Tibial artery (tissue), 4 donors: ENCODE measurements at regions of chr17 and their contacts with region 1.

Region 1: DNA sequence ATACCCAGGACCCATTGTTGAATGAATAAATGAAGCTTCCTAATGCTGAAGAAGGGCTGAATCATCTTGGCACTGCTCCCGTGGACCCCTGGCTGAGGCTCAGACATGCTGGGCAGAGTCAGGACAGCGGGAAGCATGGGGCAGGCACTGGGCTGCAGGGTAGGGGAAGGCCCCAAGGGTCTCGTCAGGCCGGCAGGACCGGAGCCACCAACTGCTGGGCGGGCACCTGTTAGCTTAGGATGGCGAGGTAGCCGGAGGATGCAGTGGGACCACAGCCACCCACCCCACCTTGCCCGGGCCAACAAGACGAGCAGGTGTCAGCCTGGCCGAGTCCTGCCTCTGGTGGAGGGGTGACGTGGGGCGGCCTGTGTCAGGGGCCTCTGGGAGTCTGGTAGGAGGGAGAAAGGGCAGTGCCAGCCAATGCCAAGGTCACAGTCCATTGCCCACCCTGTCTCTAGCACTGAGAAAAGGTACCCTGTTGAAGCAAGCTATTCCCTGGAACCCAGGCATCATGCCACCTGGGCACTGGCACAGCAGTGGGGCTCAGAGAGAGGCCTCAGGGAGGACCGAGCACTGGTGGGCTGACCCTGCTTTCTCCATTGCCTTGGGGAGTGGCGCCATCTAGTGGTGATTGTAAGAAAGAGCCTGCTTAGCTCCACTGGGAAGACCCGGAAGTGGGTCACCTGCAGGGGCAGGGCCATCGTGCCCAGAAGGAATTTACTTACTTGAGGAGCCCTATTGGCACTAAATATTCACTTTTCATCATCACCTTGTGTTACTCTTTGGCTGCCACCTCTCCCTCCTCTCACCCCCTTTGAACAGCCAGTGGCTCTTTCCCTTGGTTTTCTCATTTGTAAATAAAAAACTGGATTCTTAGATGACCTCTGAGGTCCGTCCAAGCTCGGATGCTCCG is 3.0 kb upstream of the DLX3 start:
- DNase-seq: peak; percentile 50 to 81
- H3K4me3 ChIP-seq: no peak overlapping the region
- H3K27ac ChIP-seq: no peak overlapping the region
- H3K4me1 ChIP-seq: peaks cover 0 to 42% (median 32%) of the 10 kb centered on the region in 4 donors
- H3K27me3 ChIP-seq: peaks cover 4 to 83% of the 10 kb centered on the region in 2 donors
- CTCF ChIP-seq: peak; percentile 90 to 91

Region 2: DNA sequence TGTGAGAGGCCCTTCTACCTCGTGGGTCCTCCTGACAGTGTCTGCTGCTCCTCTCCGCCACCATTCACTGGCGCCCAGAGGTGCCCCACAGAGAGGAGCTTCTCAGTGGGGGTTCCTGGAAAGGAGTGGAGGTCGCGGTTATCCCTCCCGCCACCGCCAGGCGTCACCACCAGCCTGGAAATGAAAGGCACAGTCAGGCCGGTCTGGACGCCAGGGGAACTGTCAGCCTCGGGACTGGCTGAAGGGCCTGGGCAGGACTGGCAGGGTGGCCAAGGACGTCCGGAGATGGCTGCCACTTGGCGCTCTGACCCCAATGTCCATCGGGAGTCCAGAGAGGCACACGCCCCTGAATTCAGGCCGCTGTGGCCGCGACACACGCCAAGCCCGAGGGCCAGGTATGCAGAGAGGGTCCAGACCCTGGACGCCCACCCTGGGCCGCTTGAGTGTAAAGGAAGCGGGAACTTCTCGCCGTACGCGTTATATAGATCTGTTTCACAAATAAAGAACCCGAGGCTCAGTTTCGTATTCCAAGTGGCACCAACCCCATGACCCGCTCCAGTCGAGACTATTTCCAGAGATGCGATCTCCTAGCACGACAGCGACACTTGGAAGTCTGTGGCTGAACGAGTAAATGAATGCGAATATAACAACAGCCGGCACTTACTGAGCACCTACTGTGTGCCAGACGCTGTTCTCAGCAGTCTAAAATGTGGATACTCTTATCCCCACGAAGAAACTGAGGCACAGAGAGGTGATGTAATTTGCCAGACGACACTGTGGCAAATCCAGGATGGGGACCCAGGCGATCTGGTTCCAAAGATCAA is 430.0 kb before region 1 on chr17:
- intact Hi-C with region 1: loop called (anchors 10 kb)
- DNase-seq: peak; percentile 92 to 96
- H3K4me3 ChIP-seq: peak overlapping the region; percentile 49 to 51
- H3K27ac ChIP-seq: peak overlapping the region; percentile 83 to 90
- H3K4me1 ChIP-seq: peaks cover 0 to 49% (median 27%) of the 10 kb centered on the region in 4 donors
- H3K27me3 ChIP-seq: no peaks in the 10 kb centered on the region
- CTCF ChIP-seq: peak; percentile 93 to 100

Region 3: DNA sequence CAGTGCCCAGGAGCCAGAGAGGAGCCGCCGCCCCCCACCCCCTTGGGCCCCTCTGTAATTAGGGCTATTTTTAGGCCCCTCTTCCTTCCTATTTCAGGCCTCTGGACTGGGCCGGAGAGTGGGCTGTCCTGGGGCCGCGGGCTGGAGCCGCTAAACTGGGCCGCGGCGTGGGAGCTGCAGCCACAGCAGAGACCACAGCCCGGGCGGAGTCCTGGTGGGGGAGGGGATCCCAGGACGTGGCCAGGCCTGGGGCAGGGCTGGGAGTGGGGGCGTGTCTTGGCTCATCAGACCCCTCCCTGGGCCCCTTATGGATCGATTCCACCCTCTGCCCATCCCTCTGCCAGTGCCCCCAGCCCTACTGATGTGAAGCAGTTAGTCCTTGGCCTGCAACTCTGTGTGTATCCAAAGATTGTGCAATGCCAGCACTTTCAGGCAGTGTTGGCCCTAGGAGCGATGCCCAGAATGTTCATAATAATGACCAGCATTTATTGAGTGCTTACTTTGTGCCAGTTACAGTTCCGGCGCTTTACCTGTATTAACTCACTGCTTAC is 135.2 kb before region 1 on chr17:
- intact Hi-C with region 1: loop called (anchors 1 kb)
- DNase-seq: no peak
- H3K4me3 ChIP-seq: no peak overlapping the region
- H3K27ac ChIP-seq: no peak overlapping the region
- H3K4me1 ChIP-seq: peaks cover 0 to 7% (median 0%) of the 10 kb centered on the region in 4 donors
- H3K27me3 ChIP-seq: peaks cover 0 to 18% of the 10 kb centered on the region in 2 donors
- CTCF ChIP-seq: no peak

Region 4: DNA sequence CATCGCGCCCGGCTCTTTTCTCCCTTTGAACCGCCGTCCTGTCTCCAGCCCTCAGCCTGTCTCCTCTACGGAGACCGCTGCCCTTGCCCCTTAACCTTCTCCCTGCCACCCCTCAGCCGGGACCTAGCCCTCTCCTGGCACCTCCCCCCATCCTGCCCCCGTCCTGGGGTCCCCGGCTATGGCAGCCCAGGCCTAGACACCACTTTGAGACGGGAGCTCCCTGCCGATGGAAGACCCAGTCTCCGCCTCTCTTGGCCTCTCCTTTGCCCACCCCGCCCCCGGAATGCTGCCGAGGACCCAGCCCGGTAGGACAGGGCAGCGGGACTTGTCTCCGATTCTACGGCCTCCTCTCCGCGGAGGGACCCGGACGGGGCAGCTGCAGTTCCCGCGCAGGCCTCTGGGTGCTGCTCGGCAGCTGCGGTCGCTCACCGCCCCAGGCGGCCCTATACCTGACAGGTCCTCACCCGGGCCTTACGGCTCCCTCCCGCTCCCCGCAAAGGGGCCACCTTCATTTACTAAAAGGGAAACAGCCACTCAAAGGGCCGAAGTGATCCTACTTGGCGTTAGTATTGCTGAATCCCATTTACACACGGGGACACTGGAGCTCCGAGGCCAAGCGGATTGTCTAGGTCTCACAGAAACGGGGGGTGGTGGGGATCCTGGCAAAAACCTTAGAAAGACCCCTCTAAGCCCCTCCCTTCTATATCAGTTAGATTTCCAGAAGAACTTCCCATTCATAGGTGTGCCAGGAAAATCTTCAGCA is 117.6 kb before region 1 on chr17:
- intact Hi-C with region 1: loop called (anchors 2 kb)
- DNase-seq: peak in 1 of 2 donors; percentile 55
- H3K4me3 ChIP-seq: no peak overlapping the region
- H3K27ac ChIP-seq: no peak overlapping the region
- H3K4me1 ChIP-seq: peaks cover 0 to 7% (median 7%) of the 10 kb centered on the region in 4 donors
- H3K27me3 ChIP-seq: peaks cover 0 to 36% of the 10 kb centered on the region in 2 donors
- CTCF ChIP-seq: peak; percentile 96 to 99

Region 5: DNA sequence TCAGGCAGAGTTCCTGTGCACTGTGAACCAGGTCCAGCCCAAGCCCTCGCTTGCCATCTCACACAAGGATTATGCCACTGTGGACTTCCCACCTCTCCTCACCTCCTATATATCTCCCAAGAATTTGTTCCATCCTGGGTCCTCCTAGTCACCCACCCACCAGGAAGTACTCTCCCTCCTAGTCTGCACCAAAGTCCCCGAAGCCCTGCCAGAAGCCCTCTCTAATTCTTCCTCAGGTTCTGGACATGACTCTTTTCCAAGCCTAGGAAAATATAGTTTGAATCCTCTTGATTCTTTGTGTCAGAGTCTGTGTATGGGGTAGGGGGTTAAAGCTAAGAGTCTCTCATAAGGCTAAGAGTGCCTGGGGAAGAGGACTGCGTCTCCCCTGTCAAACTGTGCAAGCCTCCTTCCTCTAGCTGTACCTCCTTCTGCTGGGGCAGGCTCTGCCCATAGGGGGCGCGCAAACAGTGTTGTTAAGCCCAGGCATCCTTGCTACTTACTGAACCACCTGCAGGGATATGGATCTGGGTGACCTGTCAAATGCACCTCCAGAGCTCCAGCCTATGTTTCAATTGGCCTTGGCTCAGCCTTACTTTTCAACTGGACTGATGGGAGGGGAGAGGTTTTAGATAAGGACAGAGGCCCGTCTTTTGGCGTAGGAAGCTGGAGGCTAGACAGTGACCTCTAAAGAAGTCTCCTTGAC is 45.7 kb before region 1 on chr17:
- intact Hi-C with region 1: loop called (anchors 1 kb)
- DNase-seq: peak; percentile 84 to 85
- H3K4me3 ChIP-seq: no peak overlapping the region
- H3K27ac ChIP-seq: no peak overlapping the region
- H3K4me1 ChIP-seq: peaks cover 0 to 6% (median 5%) of the 10 kb centered on the region in 4 donors
- H3K27me3 ChIP-seq: peaks cover 0 to 56% of the 10 kb centered on the region in 2 donors
- CTCF ChIP-seq: peak; percentile 74 to 84